ENCODE measurements at regions of chr4 and their contacts with region 1.

Region 1: DNA sequence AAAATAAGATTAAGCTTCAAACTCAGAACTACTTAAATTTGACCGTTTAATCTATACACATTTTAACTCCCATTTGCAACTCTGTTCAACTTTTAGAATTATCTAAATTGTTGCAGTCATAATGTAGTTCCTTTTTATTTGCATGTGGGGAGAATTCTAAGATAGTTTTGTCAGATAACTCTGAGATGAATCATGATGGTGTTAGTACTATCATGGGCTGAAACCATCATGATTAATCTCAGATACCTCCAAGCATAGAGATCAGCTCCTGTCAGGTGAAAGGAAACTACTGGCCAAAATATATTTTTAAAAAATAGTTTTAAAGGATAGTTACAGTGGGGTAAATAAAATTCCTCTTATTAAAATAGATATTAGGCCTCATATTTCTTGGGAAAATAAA is 39.0 kb downstream of the FBXO8 start:
- H3K4me3 Mint-ChIP-seq: no peak overlapping the region
- H3K27ac Mint-ChIP-seq: no peak overlapping the region
- H3K4me1 Mint-ChIP-seq: no peaks in the 10 kb centered on the region
- H3K27me3 Mint-ChIP-seq: no peaks in the 10 kb centered on the region

Region 2: DNA sequence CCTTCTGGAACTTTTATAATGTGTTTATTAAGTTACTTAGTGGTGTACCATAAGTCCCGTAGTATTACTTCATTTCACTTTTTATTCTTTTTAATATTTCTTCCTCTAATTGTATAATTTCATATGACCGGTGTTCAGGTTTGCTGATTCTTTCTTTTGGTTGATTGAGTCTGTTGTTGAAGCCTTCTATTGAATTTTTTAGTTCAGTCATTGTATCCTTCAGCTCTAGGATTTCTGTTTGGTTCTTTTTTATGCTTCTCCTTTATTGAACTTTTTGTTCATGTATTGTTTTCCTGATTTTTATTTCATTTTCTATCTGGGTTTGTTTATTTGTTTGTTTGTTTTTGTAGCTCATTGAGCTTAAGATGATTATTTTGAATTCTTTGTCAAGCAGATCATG is 48.0 kb after region 1 on chr4:
- intact Hi-C with region 1: loop called (anchors 5 kb)
- H3K4me3 Mint-ChIP-seq: no peak overlapping the region
- H3K27ac Mint-ChIP-seq: no peak overlapping the region
- H3K4me1 Mint-ChIP-seq: peaks cover 5% of the 10 kb centered on the region
- H3K27me3 Mint-ChIP-seq: no peaks in the 10 kb centered on the region

Measured in dendritic cell treated with granulocyte-macrophage colony-stimulating factor and Interleukin-4, amounts not matched to agents 40 ng/mL and 50 ng/mL, for 4 days (primary cell).